Naive thymus-derived CD4-positive, alpha-beta T cell (primary cell): ENCODE measurements at regions of chr22 and their contacts with region 1.

Region 1: DNA sequence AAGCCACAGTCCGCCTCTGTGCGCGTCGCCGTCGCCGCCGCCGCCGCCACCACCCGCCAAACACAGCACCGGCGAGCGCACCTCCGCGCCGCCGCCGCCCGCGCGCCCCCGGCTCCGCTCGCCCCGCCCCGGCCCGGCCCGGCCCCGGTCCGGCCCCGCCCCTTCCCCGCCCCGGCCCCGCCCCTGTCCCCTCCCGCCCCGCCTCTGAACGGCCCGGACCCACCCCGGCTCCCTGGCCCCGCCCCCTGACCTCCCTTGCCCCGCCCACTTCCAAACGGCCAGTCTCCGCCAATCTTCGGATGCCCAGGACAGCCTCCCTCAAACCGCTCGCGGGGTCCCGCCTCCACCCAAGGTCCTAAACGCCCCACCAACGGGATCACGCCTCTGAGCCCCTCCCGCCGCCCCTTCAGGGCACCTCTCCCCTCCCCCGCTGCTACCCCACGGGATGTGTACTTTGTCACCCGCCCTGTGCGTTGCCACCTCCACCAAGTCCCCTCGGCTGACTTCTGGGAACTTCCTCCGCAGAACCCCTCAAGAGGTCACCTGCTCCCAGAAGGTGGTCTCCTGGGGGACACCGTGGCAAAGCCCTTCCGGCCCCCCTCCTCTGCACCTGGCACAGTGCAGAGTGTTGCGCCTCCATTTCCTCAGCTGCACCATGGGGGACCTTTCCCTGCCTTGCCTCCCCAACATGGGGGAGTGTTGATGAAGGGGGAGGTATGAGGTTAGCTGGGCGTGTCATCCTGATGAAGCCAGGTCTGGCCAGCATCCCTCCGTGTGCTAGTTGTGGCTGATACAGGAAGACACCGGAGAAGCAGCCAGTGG is at the start of gene KIAA0930:
- DNase-seq: peak; percentile 62 to 84 (median 74)
- ATAC-seq: peak; percentile 90
- H3K4me3 ChIP-seq: peak within 1 kb of the TSS; percentile 60
- H3K4me3 Mint-ChIP-seq: peak within 1 kb of the TSS; percentile 85 to 99 (median 94)
- H3K27ac ChIP-seq: peak within 1 kb of the TSS; percentile 66
- H3K27ac Mint-ChIP-seq: peak within 1 kb of the TSS; percentile 72 to 93 (median 87)
- H3K4me1 ChIP-seq: peaks cover 11 to 17% of the 10 kb centered on the region in 2 donors
- H3K4me1 Mint-ChIP-seq: peaks cover 18 to 40% (median 32%) of the 10 kb centered on the region in 7 donors
- H3K27me3 ChIP-seq: no peaks in the 10 kb centered on the region
- H3K27me3 Mint-ChIP-seq: peaks cover 0 to 2% (median 0%) of the 10 kb centered on the region in 5 donors
- total RNA-seq, gene KIAA0930: 13.2 to 58.2 (median 27.9) TPM

Region 2: GRCh38 chr22:44701824-44702478 is 539.1 kb before region 1 on chr22 and contains the start of gene PRR5:
- CTCF ChIA-PET with region 1: no interaction called
- POLR2A ChIA-PET with region 1: no interaction called
- intact Hi-C with region 1: loop called in 1 of 2 experiments (anchors 10 kb)
- DNase-seq: peak; percentile 73 to 85 (median 81)
- ATAC-seq: peak; percentile 94
- H3K4me3 ChIP-seq: peak within 1 kb of the TSS; percentile 64
- H3K4me3 Mint-ChIP-seq: peak within 1 kb of the TSS; percentile 72 to 83 (median 78)
- H3K27ac ChIP-seq: peak within 1 kb of the TSS; percentile 68
- H3K27ac Mint-ChIP-seq: peak within 1 kb of the TSS; percentile 74 to 91 (median 83)
- H3K4me1 ChIP-seq: peaks cover 21 to 23% of the 10 kb centered on the region in 2 donors
- H3K4me1 Mint-ChIP-seq: peaks cover 5 to 31% (median 17%) of the 10 kb centered on the region in 7 donors
- H3K27me3 ChIP-seq: no peaks in the 10 kb centered on the region
- H3K27me3 Mint-ChIP-seq: peaks cover 0 to 9% (median 0%) of the 10 kb centered on the region in 5 donors
- total RNA-seq, gene PRR5: 19.6 to 49.1 (median 44.4) TPM

Region 3: GRCh38 chr22:44975427-44976262 is 265.4 kb before region 1 on chr22:
- CTCF ChIA-PET with region 1: no interaction called
- POLR2A ChIA-PET with region 1: no interaction called
- intact Hi-C with region 1: no loop called
- DNase-seq: peak in 8 of 9 donors; percentile 10 to 82 (median 24)
- ATAC-seq: peak; percentile 84
- H3K4me3 ChIP-seq: no peak overlapping the region
- H3K4me3 Mint-ChIP-seq: no peak overlapping the region
- H3K27ac ChIP-seq: no peak overlapping the region
- H3K27ac Mint-ChIP-seq: no peak overlapping the region
- H3K4me1 ChIP-seq: no peaks in the 10 kb centered on the region
- H3K4me1 Mint-ChIP-seq: no peaks in the 10 kb centered on the region
- H3K27me3 ChIP-seq: no peaks in the 10 kb centered on the region
- H3K27me3 Mint-ChIP-seq: peaks cover 0 to 39% (median 24%) of the 10 kb centered on the region in 5 donors

Region 4: GRCh38 chr22:45172881-45173585 is 68.0 kb before region 1 on chr22:
- CTCF ChIA-PET with region 1: no interaction called
- POLR2A ChIA-PET with region 1: no interaction called
- intact Hi-C with region 1: loop called in 1 of 2 experiments (anchors 2 kb)
- DNase-seq: peak in 7 of 9 donors; percentile 65 to 85 (median 79)
- ATAC-seq: peak; percentile 95
- H3K4me3 ChIP-seq: peak overlapping the region; percentile 52
- H3K4me3 Mint-ChIP-seq: peak overlapping the region; percentile 66 to 88 (median 78)
- H3K27ac ChIP-seq: peak overlapping the region; percentile 80
- H3K27ac Mint-ChIP-seq: peak overlapping the region; percentile 89 to 98 (median 93)
- H3K4me1 ChIP-seq: peaks cover 42 to 72% of the 10 kb centered on the region in 2 donors
- H3K4me1 Mint-ChIP-seq: peaks cover 52 to 96% (median 93%) of the 10 kb centered on the region in 7 donors
- H3K27me3 ChIP-seq: no peaks in the 10 kb centered on the region
- H3K27me3 Mint-ChIP-seq: no peaks in the 10 kb centered on the region

Region 5: DNA sequence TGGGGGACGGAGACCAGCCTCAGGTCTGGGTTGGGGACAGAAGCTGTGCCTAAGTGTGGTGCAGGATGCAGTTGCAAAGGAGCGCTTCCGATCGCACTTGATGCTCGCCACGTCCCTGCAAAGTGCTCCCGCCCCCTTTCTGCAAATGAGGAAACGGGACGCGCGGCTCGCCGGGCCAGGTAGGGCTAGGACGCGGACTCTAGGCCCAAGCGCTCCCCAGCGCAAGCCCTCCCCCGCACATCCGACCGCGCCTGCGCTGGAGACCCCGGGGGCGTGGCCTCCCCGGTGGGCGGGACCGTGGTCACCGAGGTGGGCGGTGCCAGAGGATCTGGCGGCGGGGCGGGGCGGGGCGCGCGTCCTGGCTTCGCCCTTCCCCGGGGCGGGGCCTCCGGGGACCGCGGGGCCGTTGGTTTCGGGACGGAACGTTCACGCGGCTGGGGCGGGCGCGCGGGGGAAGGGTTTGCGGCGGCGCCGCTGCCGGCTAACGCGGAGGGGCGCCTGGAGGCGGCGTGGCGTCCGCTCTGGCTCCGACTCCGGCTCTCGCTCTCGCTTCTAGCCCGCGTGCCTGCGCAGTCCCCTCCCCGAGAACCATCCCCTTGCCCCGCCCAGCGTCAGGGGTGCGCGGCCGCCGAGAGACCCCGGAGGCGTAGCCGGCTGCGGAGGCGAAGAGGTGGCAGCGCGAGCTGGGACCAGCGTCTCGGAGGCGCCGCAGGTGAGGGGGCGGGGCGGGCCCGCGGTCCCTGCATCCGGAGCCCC is 68.6 kb after region 1 on chr22 and contains the start of gene FAM118A:
- CTCF ChIA-PET with region 1: no interaction called
- POLR2A ChIA-PET with region 1: interaction called, 6 read pairs
- intact Hi-C with region 1: loop called (anchors 1 to 2 kb)
- DNase-seq: peak; percentile 86 to 100 (median 95)
- ATAC-seq: peak; percentile 96
- H3K4me3 ChIP-seq: peak within 1 kb of the TSS; percentile 76
- H3K4me3 Mint-ChIP-seq: peak within 1 kb of the TSS; percentile 86 to 97 (median 89)
- H3K27ac ChIP-seq: peak within 1 kb of the TSS; percentile 96
- H3K27ac Mint-ChIP-seq: peak within 1 kb of the TSS; percentile 92 to 99 (median 96)
- H3K4me1 ChIP-seq: peaks cover 14 to 21% of the 10 kb centered on the region in 2 donors
- H3K4me1 Mint-ChIP-seq: peaks cover 35 to 54% (median 49%) of the 10 kb centered on the region in 7 donors
- H3K27me3 ChIP-seq: no peaks in the 10 kb centered on the region
- H3K27me3 Mint-ChIP-seq: no peaks in the 10 kb centered on the region
- total RNA-seq, gene FAM118A: 61.3 to 216 (median 111) TPM